ENCODE measurements at regions of chr2 and their contacts with region 1.

Region 1: GRCh38 chr2:112626604-112627059 is 19.1 kb upstream of the SLC20A1 start:
- DNase-seq: peak; percentile 51 to 66 (median 61)
- ATAC-seq: peak; percentile 70
- H3K4me3 ChIP-seq: no peak overlapping the region
- H3K27ac ChIP-seq: peak overlapping the region in 2 of 4 donors; percentile 48 to 56
- H3K4me1 ChIP-seq: no peaks in the 10 kb centered on the region
- H3K27me3 ChIP-seq: no peaks in the 10 kb centered on the region
- CTCF ChIP-seq: peak; percentile 56 to 86 (median 75)
- POLR2A ChIP-seq: no peak

Region 2: GRCh38 chr2:112726497-112727190 is 100.0 kb after region 1 on chr2:
- intact Hi-C with region 1: loop called (anchors 10 kb)
- DNase-seq: peak; percentile 88 to 92 (median 90)
- ATAC-seq: peak; percentile 91
- H3K4me3 ChIP-seq: no peak overlapping the region
- H3K27ac ChIP-seq: no peak overlapping the region
- H3K4me1 ChIP-seq: no peaks in the 10 kb centered on the region
- H3K27me3 ChIP-seq: no peaks in the 10 kb centered on the region
- CTCF ChIP-seq: peak; percentile 86 to 97 (median 95)
- POLR2A ChIP-seq: no peak

Region 3: DNA sequence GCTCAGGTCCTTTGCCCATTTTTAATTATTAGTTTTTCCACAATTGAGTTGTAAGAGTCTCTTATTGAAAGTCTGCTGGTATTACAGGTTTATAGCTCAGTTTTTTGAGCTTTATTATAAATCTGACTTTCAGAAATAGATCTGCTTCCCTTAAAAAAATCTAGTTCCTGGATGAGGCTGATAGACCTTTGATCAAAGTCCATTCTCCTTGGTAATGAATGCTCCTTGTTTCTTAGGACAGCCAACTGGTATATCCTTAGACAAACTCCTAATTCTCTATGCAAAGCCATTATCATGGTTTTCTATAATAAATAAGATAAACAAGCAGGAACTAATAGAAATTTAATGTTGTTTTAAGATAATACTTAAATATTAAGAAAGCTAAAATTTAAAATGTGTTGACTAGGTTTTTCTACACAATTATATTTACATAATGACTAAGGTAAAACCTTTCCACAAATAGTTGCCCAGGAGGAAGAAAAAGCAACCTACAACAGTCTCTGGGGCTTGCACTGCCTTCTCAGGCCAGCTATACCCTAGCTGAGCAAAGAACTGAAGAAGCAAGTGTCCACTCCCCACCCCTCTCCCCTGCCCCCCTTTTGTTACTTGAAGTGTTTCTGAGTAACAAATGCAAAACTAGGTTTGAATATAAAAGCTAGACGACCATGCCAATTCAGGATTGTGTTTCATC is 111.1 kb after region 1 on chr2:
- intact Hi-C with region 1: no loop called
- DNase-seq: no peak
- ATAC-seq: no peak
- H3K4me3 ChIP-seq: no peak overlapping the region
- H3K27ac ChIP-seq: no peak overlapping the region
- H3K4me1 ChIP-seq: peaks cover 4% of the 10 kb centered on the region
- H3K27me3 ChIP-seq: no peaks in the 10 kb centered on the region
- CTCF ChIP-seq: no peak
- POLR2A ChIP-seq: no peak

Region 4: GRCh38 chr2:112749755-112750559 is 123.3 kb after region 1 on chr2:
- intact Hi-C with region 1: no loop called
- DNase-seq: peak; percentile 62 to 66 (median 63)
- ATAC-seq: peak; percentile 65
- H3K4me3 ChIP-seq: no peak overlapping the region
- H3K27ac ChIP-seq: no peak overlapping the region
- H3K4me1 ChIP-seq: peaks cover 9% of the 10 kb centered on the region
- H3K27me3 ChIP-seq: no peaks in the 10 kb centered on the region
- CTCF ChIP-seq: peak; percentile 62 to 89 (median 75)
- POLR2A ChIP-seq: no peak

Measured in body of pancreas (tissue), 4 donors.